ENCODE measurements at regions of chr16 and their contacts with region 1.

Region 1: DNA sequence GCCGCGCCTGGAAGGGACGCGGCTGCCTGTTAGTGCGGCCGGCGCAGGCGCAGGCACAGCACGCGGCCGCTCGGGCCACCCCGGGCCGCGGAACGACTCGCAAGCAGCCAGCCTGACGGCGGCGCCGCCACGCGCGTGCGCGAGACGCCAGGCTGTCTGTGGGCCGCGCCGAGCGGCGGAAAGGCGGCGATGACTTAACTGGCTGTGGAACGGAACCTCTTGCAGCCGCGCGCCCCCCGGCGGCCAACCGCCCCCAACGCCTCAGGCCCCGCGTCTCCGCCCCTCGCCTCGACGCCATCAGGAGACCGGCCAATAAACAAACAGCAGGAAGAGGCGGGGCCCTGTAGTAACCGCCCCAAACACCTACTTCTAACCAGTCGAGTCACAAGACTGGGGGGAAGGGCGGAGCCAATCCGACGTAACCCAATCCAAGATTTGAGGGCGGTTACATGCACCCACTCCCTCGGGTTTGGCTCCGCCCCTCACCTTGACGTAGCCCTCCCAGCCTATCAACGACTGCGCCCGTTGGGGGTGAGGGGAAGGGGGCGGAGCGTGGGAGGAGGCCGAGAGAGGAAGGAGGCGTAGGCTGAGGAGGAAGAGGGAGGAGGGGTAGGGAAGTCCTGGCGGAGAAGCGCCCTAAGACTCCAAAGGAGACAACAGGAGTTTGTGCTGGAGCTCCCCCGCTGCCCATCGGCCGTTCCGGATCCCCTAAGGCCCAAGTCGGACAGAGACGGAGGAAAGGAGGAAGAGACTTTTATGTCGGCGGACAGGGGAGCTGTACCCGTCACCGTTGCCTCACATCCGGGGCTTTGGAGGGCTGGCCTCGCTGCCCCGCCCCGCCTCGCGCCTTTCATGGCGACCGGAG is at the start of gene FBRS:
- DNase-seq: peak; percentile 99 to 100 (median 100)
- ATAC-seq: peak; percentile 74
- H3K4me3 ChIP-seq: peak within 1 kb of the TSS; percentile 93
- H3K4me3 Mint-ChIP-seq: peak within 1 kb of the TSS; percentile 94
- H3K27ac ChIP-seq: peak within 1 kb of the TSS; percentile 99
- H3K27ac Mint-ChIP-seq: peak within 1 kb of the TSS; percentile 99
- H3K4me1 ChIP-seq: peaks cover 51% of the 10 kb centered on the region
- H3K4me1 Mint-ChIP-seq: peaks cover 44% of the 10 kb centered on the region
- H3K27me3 ChIP-seq: no peaks in the 10 kb centered on the region
- H3K27me3 Mint-ChIP-seq: no peaks in the 10 kb centered on the region
- CTCF ChIP-seq: peak; percentile 78
- total RNA-seq, gene FBRS: 162 to 163 TPM

Region 2: GRCh38 chr16:30065143-30065850 is 592.8 kb before region 1 on chr16 and contains the start of gene ALDOA:
- CTCF ChIA-PET with region 1: no interaction called
- POLR2A ChIA-PET with region 1: interaction called, 10 read pairs
- intact Hi-C with region 1: no loop called
- DNase-seq: peak; percentile 85 to 97 (median 93)
- ATAC-seq: peak; percentile 80
- H3K4me3 ChIP-seq: peak within 1 kb of the TSS; percentile 100
- H3K4me3 Mint-ChIP-seq: peak within 1 kb of the TSS; percentile 100
- H3K27ac ChIP-seq: peak within 1 kb of the TSS; percentile 87 to 92
- H3K27ac Mint-ChIP-seq: peak within 1 kb of the TSS; percentile 96
- H3K4me1 ChIP-seq: peaks cover 60% of the 10 kb centered on the region
- H3K4me1 Mint-ChIP-seq: peaks cover 44% of the 10 kb centered on the region
- H3K27me3 ChIP-seq: no peaks in the 10 kb centered on the region
- H3K27me3 Mint-ChIP-seq: no peaks in the 10 kb centered on the region
- CTCF ChIP-seq: no peak
- total RNA-seq, gene ALDOA: 390 to 396 TPM

Region 3: GRCh38 chr16:30557957-30558788 is 99.9 kb before region 1 on chr16 and contains the start of gene ZNF764:
- CTCF ChIA-PET with region 1: interaction called, 7 read pairs
- POLR2A ChIA-PET with region 1: interaction called, 14 read pairs
- intact Hi-C with region 1: no loop called
- DNase-seq: peak; percentile 90 to 99 (median 95)
- ATAC-seq: peak; percentile 89
- H3K4me3 ChIP-seq: peak within 1 kb of the TSS; percentile 73
- H3K4me3 Mint-ChIP-seq: peak within 1 kb of the TSS; percentile 93
- H3K27ac ChIP-seq: peak within 1 kb of the TSS; percentile 93 to 94
- H3K27ac Mint-ChIP-seq: peak within 1 kb of the TSS; percentile 94
- H3K4me1 ChIP-seq: peaks cover 68% of the 10 kb centered on the region
- H3K4me1 Mint-ChIP-seq: peaks cover 41% of the 10 kb centered on the region
- H3K27me3 ChIP-seq: no peaks in the 10 kb centered on the region
- H3K27me3 Mint-ChIP-seq: no peaks in the 10 kb centered on the region
- CTCF ChIP-seq: no peak
- total RNA-seq, gene ZNF764: 20.4 to 22.9 TPM

Region 4: GRCh38 chr16:30628627-30629540 is 29.2 kb before region 1 on chr16:
- CTCF ChIA-PET with region 1: interaction called, 7 read pairs
- POLR2A ChIA-PET with region 1: interaction called, 13 read pairs
- intact Hi-C with region 1: loop called in 1 of 2 experiments (anchors 2 kb)
- DNase-seq: peak; percentile 78 to 93 (median 87)
- ATAC-seq: peak; percentile 99
- H3K4me3 ChIP-seq: peak overlapping the region; percentile 29
- H3K4me3 Mint-ChIP-seq: peak overlapping the region; percentile 59
- H3K27ac ChIP-seq: no peak overlapping the region
- H3K27ac Mint-ChIP-seq: peak overlapping the region; percentile 71
- H3K4me1 ChIP-seq: peaks cover 13% of the 10 kb centered on the region
- H3K4me1 Mint-ChIP-seq: peaks cover 9% of the 10 kb centered on the region
- H3K27me3 ChIP-seq: no peaks in the 10 kb centered on the region
- H3K27me3 Mint-ChIP-seq: no peaks in the 10 kb centered on the region
- CTCF ChIP-seq: peak; percentile 90

Region 5: DNA sequence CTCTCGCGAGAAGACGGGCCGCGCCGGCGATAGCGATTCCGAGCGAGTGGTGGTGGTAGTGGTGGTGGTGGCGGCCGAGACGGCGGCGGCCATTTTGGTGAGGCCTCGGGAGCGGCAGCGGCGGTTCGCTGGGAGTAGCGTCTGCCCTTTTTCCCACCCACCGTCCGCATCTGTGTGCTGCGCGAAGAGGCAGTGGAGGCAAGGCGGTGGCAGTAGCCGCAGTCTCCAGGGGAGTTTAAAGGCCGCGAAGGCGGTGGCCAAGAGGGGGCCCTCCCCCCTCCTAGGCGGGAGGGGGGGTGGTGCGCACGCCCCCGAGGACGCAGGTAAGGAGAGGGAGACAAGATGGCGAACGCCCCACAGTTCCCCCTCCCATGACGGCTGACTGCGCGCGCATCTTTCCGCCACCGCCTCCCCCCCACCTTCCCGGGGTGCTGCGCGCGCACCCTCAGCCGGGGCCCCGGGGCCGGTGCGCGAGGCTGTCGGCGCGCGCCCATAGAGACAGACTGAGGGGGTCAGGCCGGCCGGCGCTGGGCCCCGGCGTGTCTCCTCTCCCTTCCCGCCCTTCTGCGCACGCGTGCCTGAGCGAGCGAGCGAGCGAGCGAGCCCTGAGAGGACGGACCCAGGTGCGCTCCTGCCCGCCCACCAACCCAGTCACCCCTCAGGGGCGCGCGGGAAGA is 40.2 kb after region 1 on chr16:
- CTCF ChIA-PET with region 1: interaction called, 53 read pairs
- POLR2A ChIA-PET with region 1: interaction called, 82 read pairs
- intact Hi-C with region 1: loop called (anchors 1 kb)
- DNase-seq: peak; percentile 97 to 100 (median 99)
- ATAC-seq: peak; percentile 75
- H3K4me3 ChIP-seq: peak overlapping the region; percentile 97
- H3K4me3 Mint-ChIP-seq: peak overlapping the region; percentile 98
- H3K27ac ChIP-seq: peak overlapping the region; percentile 100
- H3K27ac Mint-ChIP-seq: peak overlapping the region; percentile 100
- H3K4me1 ChIP-seq: peaks cover 38% of the 10 kb centered on the region
- H3K4me1 Mint-ChIP-seq: peaks cover 37% of the 10 kb centered on the region
- H3K27me3 ChIP-seq: no peaks in the 10 kb centered on the region
- H3K27me3 Mint-ChIP-seq: no peaks in the 10 kb centered on the region
- CTCF ChIP-seq: no peak

Region 6: DNA sequence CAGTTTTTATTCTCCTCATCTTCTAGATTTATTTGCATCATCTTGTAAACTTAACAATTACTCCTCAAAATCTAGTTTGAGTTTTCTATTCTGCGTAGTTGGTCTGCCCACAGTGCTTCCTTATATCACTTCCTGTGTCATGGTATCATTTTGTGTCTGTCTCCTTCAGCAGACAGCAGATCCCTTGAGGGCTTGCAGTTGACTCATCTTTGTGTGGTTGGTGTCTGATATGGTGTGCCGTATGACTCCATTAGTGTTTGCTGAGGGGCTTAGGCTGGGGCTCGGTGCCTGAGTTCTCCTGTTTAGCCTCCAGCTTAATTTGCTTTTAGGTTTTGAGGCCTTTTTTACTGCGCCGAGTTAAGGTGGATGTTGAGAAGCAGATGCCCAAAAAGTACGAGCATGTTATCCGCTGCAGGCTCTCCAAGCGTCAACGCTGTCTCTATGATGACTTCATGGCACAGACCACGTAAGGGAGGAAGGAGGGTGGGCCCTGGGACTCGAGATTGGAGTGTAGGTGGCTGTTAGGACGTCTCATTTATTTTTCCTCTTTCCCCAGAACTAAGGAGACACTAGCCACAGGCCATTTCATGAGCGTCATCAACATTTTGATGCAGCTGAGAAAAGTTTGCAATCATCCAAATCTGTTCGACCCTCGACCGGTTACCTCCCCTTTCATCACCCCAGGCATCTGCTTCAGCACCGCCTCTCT is 57.8 kb after region 1 on chr16:
- CTCF ChIA-PET with region 1: no interaction called
- POLR2A ChIA-PET with region 1: no interaction called
- intact Hi-C with region 1: no loop called
- DNase-seq: peak in 12 of 14 experiments; percentile 8 to 78 (median 23)
- ATAC-seq: peak; percentile 96
- H3K4me3 ChIP-seq: no peak overlapping the region
- H3K4me3 Mint-ChIP-seq: peak overlapping the region; percentile 65
- H3K27ac ChIP-seq: peak overlapping the region; percentile 29 to 32
- H3K27ac Mint-ChIP-seq: peak overlapping the region; percentile 86
- H3K4me1 ChIP-seq: peaks cover 18% of the 10 kb centered on the region
- H3K4me1 Mint-ChIP-seq: peaks cover 34% of the 10 kb centered on the region
- H3K27me3 ChIP-seq: no peaks in the 10 kb centered on the region
- H3K27me3 Mint-ChIP-seq: no peaks in the 10 kb centered on the region
- CTCF ChIP-seq: no peak

Region 7: GRCh38 chr16:31010585-31011325 is 352.7 kb after region 1 on chr16 and contains the start of gene STX1B:
- CTCF ChIA-PET with region 1: no interaction called
- POLR2A ChIA-PET with region 1: no interaction called
- intact Hi-C with region 1: no loop called
- DNase-seq: peak; percentile 36 to 80 (median 62)
- ATAC-seq: peak; percentile 82
- H3K4me3 ChIP-seq: peak within 1 kb of the TSS; percentile 53
- H3K4me3 Mint-ChIP-seq: peak within 1 kb of the TSS; percentile 87
- H3K27ac ChIP-seq: no peak within 1 kb of the TSS
- H3K27ac Mint-ChIP-seq: peak within 1 kb of the TSS; percentile 20
- H3K4me1 ChIP-seq: peaks cover 9% of the 10 kb centered on the region
- H3K4me1 Mint-ChIP-seq: peaks cover 23% of the 10 kb centered on the region
- H3K27me3 ChIP-seq: peaks cover 2 to 13% of the 10 kb centered on the region in 2 experiments
- H3K27me3 Mint-ChIP-seq: peaks cover 32% of the 10 kb centered on the region
- CTCF ChIP-seq: no peak
- total RNA-seq, gene STX1B: 2.9 to 3.1 TPM